ENCODE measurements at regions of chr12 and their contacts with region 1.

Region 1: GRCh38 chr12:8011331-8011730 is 21.2 kb upstream of the FOXJ2 start:
- DNase-seq: peak in 1 of 2 experiments; percentile 85
- H3K4me3 ChIP-seq: no peak overlapping the region
- H3K27ac ChIP-seq: peak overlapping the region; percentile 26
- H3K4me1 ChIP-seq: peaks cover 6% of the 10 kb centered on the region
- H3K27me3 ChIP-seq: no peaks in the 10 kb centered on the region
- CTCF ChIP-seq: no peak

Region 2: GRCh38 chr12:7583571-7583970 is 427.8 kb before region 1 on chr12:
- CTCF ChIA-PET with region 1: no interaction called
- POLR2A ChIA-PET with region 1: interaction called, 37 read pairs
- intact Hi-C with region 1: no loop called
- DNase-seq: no peak
- H3K4me3 ChIP-seq: no peak overlapping the region
- H3K27ac ChIP-seq: peak overlapping the region; percentile 82
- H3K4me1 ChIP-seq: peaks cover 20% of the 10 kb centered on the region
- H3K27me3 ChIP-seq: no peaks in the 10 kb centered on the region
- CTCF ChIP-seq: no peak

Region 3: DNA sequence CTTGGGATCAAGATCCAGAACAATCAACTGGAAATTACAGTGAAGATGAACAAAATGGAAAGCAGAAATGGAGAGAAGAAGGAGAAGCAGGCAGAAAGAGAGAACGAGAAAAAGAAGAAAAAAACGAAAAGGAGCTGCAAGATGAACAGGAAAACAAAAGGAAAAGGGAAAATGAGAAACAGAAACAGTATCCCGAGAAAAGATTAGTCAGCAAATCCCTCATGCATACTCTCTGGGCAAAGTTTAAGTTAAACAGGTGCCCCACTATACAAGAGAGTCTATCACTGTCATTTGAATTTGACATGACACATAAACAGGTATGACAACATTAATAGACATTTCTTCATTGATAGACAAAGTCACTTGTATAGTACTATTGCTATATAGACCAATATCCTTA is 241.3 kb before region 1 on chr12:
- CTCF ChIA-PET with region 1: no interaction called
- POLR2A ChIA-PET with region 1: no interaction called
- intact Hi-C with region 1: no loop called
- DNase-seq: peak in 1 of 2 experiments; percentile 41
- H3K4me3 ChIP-seq: no peak overlapping the region
- H3K27ac ChIP-seq: no peak overlapping the region
- H3K4me1 ChIP-seq: no peaks in the 10 kb centered on the region
- H3K27me3 ChIP-seq: no peaks in the 10 kb centered on the region
- CTCF ChIP-seq: no peak